Heart right ventricle (tissue), 16 donors: ENCODE measurements at regions of chr4 and their contacts with region 1.

Region 1: DNA sequence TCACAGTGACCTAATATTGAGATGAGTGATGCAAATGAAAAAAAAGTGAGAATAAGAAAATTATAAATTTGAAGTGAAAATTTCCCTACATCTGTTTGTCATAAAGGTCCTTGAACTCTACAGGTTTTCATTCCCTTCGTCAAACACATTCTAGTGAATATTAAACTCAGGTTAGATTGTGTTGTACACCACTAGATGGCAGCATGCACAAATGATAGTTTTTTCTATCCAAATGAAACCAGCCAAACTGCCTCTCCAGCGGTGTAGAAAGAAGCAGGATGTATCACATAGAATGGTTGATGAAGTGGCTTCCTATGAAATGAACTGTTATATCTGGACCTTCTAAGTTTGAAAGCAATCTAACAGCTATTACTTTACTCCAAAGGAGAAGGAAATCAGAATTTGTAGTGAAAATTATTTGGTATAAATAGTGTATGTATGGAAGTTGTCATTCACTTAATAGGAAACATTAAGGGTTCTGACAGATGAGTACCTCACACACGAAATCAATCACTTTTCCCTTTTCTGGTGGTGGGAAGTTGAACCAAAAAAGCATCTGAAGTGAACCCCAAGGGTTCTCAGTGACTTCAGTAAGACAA is 382.7 kb downstream of the UNC5C start:
- DNase-seq: peak in 1 of 2 donors; percentile 49
- ATAC-seq: peak in 6 of 8 donors; percentile 56 to 74 (median 64)
- H3K4me3 ChIP-seq: no peak overlapping the region
- H3K27ac ChIP-seq: no peak overlapping the region
- H3K4me1 ChIP-seq: no peaks in the 10 kb centered on the region
- H3K27me3 ChIP-seq: peaks cover 0 to 5% (median 0%) of the 10 kb centered on the region in 7 donors
- CTCF ChIP-seq: peak; percentile 34 to 81 (median 69)

Region 2: DNA sequence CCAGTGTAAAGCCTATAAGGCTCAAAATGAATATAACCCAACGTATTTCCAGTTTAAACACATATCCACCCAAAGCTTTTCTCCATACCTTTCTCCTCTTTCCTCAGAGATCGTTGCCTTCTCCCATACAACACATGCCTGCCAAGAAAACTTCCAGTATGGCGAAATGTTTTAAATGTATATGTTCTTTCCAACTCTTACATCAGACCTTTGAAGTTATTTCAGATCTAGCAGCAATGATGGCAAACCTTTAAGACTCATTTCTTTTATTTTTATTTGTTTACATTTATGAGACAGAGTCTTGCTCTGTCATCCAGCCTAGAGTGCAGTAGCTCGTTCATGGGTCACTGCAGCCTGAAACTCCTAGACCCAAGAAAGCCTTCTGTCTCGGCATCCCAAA is 142.9 kb before region 1 on chr4:
- intact Hi-C with region 1: no loop called
- DNase-seq: no peak
- ATAC-seq: no peak
- H3K4me3 ChIP-seq: no peak overlapping the region
- H3K27ac ChIP-seq: no peak overlapping the region
- H3K4me1 ChIP-seq: no peaks in the 10 kb centered on the region
- H3K27me3 ChIP-seq: no peaks in the 10 kb centered on the region
- CTCF ChIP-seq: no peak

Region 3: DNA sequence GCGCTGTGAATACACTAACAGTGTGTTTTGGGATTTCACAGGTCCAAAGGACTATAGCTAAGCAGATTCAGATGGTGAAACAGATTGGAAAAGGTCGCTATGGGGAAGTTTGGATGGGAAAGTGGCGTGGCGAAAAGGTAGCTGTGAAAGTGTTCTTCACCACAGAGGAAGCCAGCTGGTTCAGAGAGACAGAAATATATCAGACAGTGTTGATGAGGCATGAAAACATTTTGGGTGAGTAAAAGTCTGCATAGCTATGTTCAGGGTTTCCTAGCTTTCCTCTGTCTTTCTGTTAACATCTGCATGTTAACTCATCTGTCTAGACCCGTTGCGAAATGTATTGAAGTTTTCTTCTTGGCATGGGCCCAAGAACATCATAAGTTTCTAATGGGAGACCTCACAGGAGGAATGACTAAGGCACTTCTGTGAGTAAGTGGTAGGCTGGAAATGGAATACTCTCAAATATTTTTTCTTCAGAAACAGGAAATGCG is 36.2 kb before region 1 on chr4:
- intact Hi-C with region 1: no loop called
- DNase-seq: peak in 1 of 2 donors; percentile 42
- ATAC-seq: peak; percentile 75 to 95 (median 86)
- H3K4me3 ChIP-seq: no peak overlapping the region
- H3K27ac ChIP-seq: peak overlapping the region in 6 of 10 donors; percentile 10 to 73 (median 30)
- H3K4me1 ChIP-seq: peaks cover 0 to 7% (median 0%) of the 10 kb centered on the region in 9 donors
- H3K27me3 ChIP-seq: no peaks in the 10 kb centered on the region
- CTCF ChIP-seq: no peak

Region 4: GRCh38 chr4:95510145-95510544 is 344.1 kb after region 1 on chr4:
- intact Hi-C with region 1: loop called in 1 of 10 experiments (anchors 5 kb)
- DNase-seq: no peak
- ATAC-seq: peak in 2 of 8 donors; percentile 28 to 62
- H3K4me3 ChIP-seq: no peak overlapping the region
- H3K27ac ChIP-seq: no peak overlapping the region
- H3K4me1 ChIP-seq: peaks cover 0 to 6% (median 0%) of the 10 kb centered on the region in 9 donors
- H3K27me3 ChIP-seq: peaks cover 0 to 2% (median 0%) of the 10 kb centered on the region in 7 donors
- CTCF ChIP-seq: peak; percentile 37 to 72 (median 65)

Region 5: DNA sequence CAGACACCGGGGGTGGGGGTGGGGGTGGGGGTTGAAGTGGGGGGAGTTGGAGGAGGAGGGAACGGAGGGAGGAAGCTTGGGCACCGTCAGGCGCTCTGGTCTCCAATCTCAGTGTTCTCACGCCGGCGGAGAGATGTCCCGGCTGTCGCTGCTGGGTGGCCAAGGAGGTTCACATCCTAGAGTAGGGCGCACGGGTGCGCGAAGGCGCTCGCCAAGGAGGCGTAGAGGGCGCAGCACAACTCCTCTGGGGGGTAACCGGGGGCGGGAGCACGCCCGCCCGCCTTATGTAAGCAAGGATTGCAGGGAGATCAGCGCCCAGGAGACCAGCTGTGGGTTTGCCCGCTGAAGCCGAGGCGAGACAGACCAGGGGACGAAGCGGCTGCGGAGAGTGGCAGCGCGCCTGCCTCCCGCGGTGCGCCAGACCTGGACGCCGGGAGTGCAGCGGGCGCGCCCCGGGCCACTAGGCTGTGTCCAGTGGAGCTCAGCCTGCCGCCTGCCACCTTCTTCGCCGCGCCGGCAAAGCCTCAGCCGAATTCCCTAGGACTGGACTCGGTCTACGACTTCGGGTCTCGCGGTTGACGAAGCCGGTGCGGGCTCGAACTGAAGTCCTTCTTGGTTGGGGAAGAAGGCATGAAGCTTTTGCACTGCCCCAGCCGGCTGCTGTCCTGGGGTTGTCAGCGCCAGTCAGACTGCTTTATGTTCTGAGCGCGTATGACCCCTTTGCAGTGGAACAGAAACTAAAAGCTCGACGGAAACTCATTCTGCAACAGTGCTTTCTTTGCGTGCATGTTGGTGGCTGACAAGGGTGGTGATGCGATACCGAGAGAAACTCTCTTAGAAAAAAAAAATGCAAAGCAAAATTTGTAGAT is 383.5 kb after region 1 on chr4:
- intact Hi-C with region 1: loop called in 2 of 10 experiments (anchors 10 kb)
- DNase-seq: peak; percentile 55 to 75
- ATAC-seq: peak; percentile 53 to 86 (median 64)
- H3K4me3 ChIP-seq: peak overlapping the region; percentile 44 to 72 (median 70)
- H3K27ac ChIP-seq: peak overlapping the region; percentile 70 to 88 (median 85)
- H3K4me1 ChIP-seq: peaks cover 0 to 25% (median 10%) of the 10 kb centered on the region in 9 donors
- H3K27me3 ChIP-seq: peaks cover 0 to 61% (median 48%) of the 10 kb centered on the region in 7 donors
- CTCF ChIP-seq: no peak

Region 6: GRCh38 chr4:96035727-96036126 is 869.7 kb after region 1 on chr4:
- intact Hi-C with region 1: loop called in 1 of 10 experiments (anchors 5 kb)
- DNase-seq: no peak
- ATAC-seq: peak in 1 of 8 donors; percentile 47
- H3K4me3 ChIP-seq: no peak overlapping the region
- H3K27ac ChIP-seq: no peak overlapping the region
- H3K4me1 ChIP-seq: no peaks in the 10 kb centered on the region
- H3K27me3 ChIP-seq: no peaks in the 10 kb centered on the region
- CTCF ChIP-seq: peak in 8 of 9 donors; percentile 4 to 53 (median 45)

Region 7: DNA sequence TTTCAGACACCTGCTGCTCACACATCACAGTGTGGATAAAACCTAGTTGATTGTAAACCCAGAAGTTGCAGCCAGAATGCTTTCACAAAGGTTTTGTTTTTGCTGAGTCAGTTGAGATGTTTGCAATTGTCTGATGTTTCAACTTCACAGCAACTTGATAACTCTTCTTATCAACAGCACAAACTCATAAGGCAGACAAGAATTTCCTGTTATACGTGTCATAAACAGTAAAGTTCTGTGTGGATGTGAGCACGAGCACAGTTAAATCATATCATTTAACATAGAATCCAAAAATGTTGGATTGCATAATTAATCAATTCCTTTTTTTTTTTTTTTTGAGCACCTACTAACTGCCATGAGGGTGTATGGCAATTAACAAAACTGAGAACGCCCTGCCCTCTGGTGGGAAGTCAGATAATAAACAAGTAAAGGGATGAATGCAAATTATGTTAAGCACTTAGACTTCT is 1186.1 kb after region 1 on chr4:
- intact Hi-C with region 1: loop called in 1 of 10 experiments (anchors 5 kb)
- DNase-seq: no peak
- ATAC-seq: no peak
- H3K4me3 ChIP-seq: no peak overlapping the region
- H3K27ac ChIP-seq: no peak overlapping the region
- H3K4me1 ChIP-seq: peaks cover 0 to 29% (median 0%) of the 10 kb centered on the region in 9 donors
- H3K27me3 ChIP-seq: no peaks in the 10 kb centered on the region
- CTCF ChIP-seq: peak in 7 of 9 donors; percentile 23 to 52 (median 37)